Dorsolateral prefrontal cortex (tissue), 120 donors: ENCODE measurements at regions of chr14 and their contacts with region 1.

Region 1: DNA sequence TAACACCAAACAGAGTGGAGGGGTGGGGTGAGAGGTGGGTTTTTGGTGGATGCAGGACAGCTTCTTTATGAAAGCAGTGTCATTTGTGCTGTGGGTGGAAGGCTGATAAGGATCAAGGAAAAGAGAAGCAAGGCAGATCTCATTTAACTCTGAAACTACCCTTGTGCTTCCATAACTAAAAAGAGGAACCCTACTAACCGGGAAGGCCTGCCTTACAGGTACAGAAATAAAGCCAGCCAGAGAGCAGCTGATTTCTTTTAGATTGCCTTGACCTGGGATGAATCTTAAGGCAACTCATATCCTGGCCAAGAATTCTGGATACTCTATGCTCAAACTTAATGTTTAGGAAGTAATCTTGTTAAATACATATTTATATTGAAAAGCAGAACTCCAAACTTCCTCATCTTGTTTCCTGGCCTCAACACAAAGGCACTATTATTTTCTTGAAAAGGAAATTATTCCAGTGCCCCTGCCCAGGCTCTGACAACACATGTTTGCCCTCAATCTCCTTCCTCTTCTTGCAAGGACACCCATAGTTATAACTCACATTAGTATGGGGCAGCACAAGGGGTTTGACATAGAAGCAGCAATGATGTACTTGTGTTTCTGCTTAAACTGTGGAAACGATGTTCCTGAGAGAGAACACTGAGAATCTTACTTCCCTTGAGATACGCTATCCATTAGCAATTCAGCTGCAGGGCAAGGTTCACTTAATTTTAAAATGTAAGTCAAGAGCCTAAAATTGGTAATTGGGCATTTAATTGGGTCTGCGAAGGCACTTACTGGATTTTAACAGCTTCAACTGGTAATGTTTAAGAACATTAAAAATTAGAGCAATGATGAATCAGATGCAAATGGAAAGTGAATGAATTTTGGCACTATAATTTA is 173.7 kb downstream of the STXBP6 start:
- DNase-seq: no peak
- H3K4me3 ChIP-seq: peak overlapping the region in 28 of 59 donors; percentile 1 to 46 (median 18)
- H3K27ac ChIP-seq: peak overlapping the region in 58 of 59 donors; percentile 40 to 97 (median 87)
- H3K27me3 ChIP-seq: no peaks in the 10 kb centered on the region
- CTCF ChIP-seq: no peak

Region 2: GRCh38 chr14:24828486-24828885 is 47.7 kb before region 1 on chr14:
- intact Hi-C with region 1: loop called in 1 of 2 experiments (anchors 10 kb)
- DNase-seq: no peak
- H3K4me3 ChIP-seq: no peak overlapping the region
- H3K27ac ChIP-seq: no peak overlapping the region
- H3K27me3 ChIP-seq: no peaks in the 10 kb centered on the region
- CTCF ChIP-seq: no peak

Region 3: GRCh38 chr14:24938593-24938992 is 62.4 kb after region 1 on chr14:
- intact Hi-C with region 1: no loop called
- DNase-seq: no peak
- H3K4me3 ChIP-seq: no peak overlapping the region
- H3K27ac ChIP-seq: peak overlapping the region in 3 of 59 donors; percentile 3 to 28 (median 7)
- H3K27me3 ChIP-seq: no peaks in the 10 kb centered on the region
- CTCF ChIP-seq: no peak